Naive thymus-derived CD8-positive, alpha-beta T cell (primary cell): ENCODE measurements at regions of chr10 and their contacts with region 1.

Region 1: DNA sequence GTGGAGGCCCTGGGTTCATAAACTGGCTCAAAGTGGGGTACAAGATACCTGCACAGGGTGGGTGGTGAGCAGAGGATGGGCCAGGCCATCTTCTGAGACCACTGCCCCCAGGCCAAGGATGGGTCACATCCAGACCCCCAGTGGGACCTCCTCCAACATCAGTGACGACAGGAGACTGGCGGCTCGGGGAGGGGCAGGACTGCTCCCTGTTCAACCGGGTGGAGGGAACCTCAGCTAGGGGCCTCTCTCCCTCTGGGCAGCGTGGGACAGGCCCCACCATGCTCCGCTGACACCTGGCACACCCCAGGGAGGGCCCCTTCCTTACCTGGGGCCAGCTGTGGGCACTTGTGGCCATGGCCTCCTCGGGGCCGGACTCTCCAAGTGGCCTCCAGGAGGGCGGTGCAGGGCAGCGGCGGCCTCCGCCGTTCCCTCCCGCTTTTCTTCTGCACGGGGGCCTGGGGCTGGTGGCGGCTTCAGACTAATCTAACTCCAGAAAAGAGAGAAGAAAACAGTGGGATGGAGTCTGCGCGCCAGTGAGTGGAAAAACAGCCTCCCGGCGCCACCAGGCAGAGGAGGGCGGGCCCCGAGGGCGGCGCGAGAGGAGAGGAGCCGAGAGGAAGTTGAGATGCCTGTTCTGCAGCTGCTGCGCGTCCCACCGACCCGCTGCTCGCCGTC is at the start of gene CALHM2:
- DNase-seq: peak in 9 of 10 donors; percentile 10 to 54 (median 43)
- ATAC-seq: peak; percentile 74 to 82
- H3K4me3 Mint-ChIP-seq: peak within 1 kb of the TSS; percentile 85 to 96 (median 90)
- H3K27ac Mint-ChIP-seq: peak within 1 kb of the TSS; percentile 76 to 94 (median 90)
- H3K4me1 Mint-ChIP-seq: peaks cover 26 to 55% (median 53%) of the 10 kb centered on the region in 4 donors
- H3K27me3 Mint-ChIP-seq: no peaks in the 10 kb centered on the region
- polyA plus RNA-seq, gene CALHM2: 3.0 to 16.8 (median 5.8) TPM

Region 2: DNA sequence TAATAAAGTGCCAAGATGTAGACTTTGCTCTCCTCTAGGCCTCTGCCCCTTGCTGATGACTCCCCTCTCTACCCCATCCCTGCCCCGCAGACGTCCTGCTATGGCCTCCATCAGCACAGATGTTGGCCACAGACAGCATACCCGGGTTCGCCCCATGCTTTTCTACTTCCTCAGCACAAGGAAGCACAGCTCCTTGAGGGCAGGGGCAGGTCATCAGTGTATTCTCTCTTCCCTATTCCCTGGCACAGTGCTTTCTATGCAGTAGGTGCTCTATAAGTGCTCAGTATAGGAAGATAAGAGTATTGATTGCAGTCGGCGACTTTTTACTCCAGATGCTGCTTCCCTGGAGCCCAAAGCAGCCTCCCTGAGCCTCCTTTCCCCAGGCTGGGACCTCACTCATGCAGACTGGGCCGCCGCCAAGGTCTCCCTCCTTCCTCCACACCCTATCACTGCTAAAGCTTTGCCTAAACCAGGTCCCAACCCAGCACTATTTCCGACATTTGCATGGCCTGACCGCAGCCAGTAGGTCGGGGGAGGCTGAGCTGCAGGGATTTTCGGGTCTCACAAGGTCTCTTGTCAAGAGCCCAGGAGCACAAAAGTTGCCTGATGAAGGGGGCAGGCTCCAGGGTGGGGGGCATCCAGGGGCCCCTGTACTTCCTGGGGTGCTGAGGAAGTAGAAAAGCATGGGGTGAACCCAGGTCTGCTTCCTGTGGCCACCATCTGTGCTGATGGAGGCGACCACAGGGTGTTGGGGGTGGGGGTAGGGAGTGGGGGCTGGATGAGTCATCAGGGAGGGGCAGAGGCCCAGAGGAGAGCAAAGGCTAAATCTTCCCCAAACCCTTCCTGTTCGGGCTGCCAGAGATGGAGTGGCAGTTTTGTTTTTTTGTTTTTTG is 19.0 kb after region 1 on chr10:
- POLR2A ChIA-PET with region 1: interaction called, 18 read pairs
- DNase-seq: peak in 9 of 10 donors; percentile 40 to 87 (median 54)
- ATAC-seq: peak; percentile 88 to 91
- H3K4me3 Mint-ChIP-seq: peak overlapping the region; percentile 49 to 87 (median 80)
- H3K27ac Mint-ChIP-seq: peak overlapping the region; percentile 71 to 97 (median 87)
- H3K4me1 Mint-ChIP-seq: peaks cover 20 to 58% (median 37%) of the 10 kb centered on the region in 4 donors
- H3K27me3 Mint-ChIP-seq: no peaks in the 10 kb centered on the region

Region 3: DNA sequence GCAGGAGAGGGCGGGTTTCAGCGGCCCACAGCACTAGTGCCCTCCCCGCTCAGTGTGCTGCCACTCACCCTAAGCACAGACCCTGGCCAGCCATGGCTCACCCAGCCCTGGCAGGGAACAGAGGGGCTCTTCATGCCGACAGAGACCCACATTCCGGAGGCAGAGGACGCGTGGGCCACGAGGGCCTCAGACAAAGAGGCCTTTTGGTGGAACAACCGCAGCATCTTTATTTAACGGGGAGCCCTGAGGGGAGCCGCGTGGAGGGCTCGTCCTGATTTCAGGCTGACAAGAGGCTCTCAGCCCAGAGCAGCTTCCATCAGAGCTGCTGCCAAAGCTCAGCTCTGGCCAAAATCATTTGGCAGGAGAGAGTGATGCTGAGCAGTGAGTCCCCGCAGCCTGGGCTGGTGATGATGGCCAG is 275.6 kb after region 1 on chr10:
- POLR2A ChIA-PET with region 1: no interaction called
- DNase-seq: no peak
- ATAC-seq: no peak
- H3K4me3 Mint-ChIP-seq: no peak overlapping the region
- H3K27ac Mint-ChIP-seq: no peak overlapping the region
- H3K4me1 Mint-ChIP-seq: peaks cover 0 to 6% (median 0%) of the 10 kb centered on the region in 4 donors
- H3K27me3 Mint-ChIP-seq: no peaks in the 10 kb centered on the region